WTC11 (cell line): ENCODE measurements at regions of chr14 and their contacts with region 1.

Region 1: DNA sequence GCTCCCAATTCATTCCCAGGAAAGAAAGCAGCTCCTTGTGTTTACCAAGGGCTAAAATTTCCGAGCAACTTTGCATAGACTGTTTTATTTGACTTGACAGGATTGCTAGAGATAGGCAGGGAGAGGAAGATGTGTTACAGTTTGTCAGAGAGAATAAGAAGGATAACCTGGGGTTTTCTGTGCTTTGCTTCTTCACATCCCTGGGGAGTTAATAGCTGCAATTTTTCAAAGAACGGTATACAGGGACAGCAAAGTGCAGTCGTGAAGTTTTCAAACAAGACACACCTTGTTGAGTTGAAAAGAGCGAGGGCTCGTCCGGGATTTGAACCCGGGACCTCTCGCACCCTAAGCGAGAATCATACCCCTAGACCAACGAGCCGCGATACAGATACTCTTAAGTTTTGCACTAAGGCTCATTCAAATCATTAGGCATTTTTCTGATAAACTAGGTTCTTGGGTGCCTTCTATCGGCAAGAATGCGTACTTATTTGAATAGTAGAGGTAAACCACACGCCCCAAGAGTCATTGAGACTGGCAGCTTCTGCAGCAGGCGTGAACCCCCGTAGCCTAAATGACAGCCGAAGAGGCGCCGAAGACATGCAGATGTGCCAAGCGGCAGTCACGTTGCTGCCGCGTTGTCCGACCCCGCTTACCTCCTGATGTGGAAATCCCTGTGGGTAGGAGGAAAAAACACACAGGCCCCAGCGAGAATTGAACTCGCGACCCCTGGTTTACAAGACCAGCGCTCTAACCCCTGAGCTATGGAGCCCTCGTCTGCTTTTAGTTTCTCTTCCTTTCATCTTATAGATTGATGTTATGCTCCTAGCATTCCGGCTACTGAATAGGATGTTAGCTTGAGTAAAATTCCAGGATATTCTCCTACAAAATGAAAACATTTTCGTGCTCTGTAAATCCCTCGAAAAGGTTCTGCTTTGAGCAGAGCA is 22.2 kb upstream of the RNASE12 start:
- DNase-seq: peak; percentile 83
- ATAC-seq: peak; percentile 82
- H3K4me3 Mint-ChIP-seq: no peak overlapping the region
- H3K27ac Mint-ChIP-seq: no peak overlapping the region
- H3K4me1 Mint-ChIP-seq: peaks cover 11% of the 10 kb centered on the region
- H3K27me3 Mint-ChIP-seq: no peaks in the 10 kb centered on the region
- CTCF ChIP-seq: peak; percentile 72

Region 2: DNA sequence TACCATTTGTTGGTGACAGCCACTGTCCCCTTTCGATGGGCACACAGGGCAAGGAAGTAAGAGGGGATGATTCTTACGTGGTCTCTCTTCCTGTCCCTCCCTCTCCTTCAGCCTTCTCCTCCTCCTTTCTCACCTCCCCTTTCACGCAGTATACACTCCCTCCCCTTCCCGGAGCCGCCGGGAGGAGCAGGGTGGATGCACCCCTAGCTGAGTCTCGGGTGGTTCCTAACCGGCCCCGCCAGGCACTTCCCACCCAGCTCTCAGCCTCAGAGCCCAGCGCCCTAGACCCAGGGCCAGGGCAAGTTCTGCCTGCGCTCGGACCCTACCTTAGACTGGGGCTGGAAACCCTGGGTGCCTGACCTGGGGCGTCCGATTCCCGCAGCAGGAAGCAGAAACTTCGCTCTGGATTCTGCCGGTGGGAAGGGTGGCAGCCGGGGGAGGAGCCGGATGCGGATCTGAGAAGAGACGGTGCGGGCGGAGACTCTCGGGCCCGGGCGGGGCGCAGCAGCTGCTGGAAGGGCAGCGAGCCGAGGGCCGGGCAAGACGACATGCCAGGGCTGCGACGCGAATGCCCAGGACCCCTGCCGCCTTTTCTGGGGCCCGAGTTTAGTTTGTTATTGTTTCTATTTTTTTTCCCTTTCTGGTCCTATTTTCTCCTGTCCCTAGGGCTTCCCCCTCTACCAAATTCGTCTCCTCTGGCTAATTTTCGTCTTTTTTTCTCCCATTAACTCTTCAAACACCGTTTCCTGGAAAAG is 200.1 kb before region 1 on chr14 and contains the start of gene TEP1:
- CTCF ChIA-PET with region 1: interaction called, 11 read pairs
- POLR2A ChIA-PET with region 1: no interaction called
- DNase-seq: peak; percentile 80
- ATAC-seq: peak; percentile 84
- H3K4me3 Mint-ChIP-seq: peak within 1 kb of the TSS; percentile 87
- H3K27ac Mint-ChIP-seq: peak within 1 kb of the TSS; percentile 95
- H3K4me1 Mint-ChIP-seq: peaks cover 16% of the 10 kb centered on the region
- H3K27me3 Mint-ChIP-seq: no peaks in the 10 kb centered on the region
- CTCF ChIP-seq: no peak
- total RNA-seq, gene TEP1: 16.0 to 19.4 TPM (median 18.8 TPM) in 3 replicates

Region 3: GRCh38 chr14:20461274-20462001 is 151.9 kb before region 1 on chr14 and contains the start of gene PIP4P1:
- CTCF ChIA-PET with region 1: interaction called, 21 read pairs
- POLR2A ChIA-PET with region 1: interaction called, 3 read pairs
- DNase-seq: peak; percentile 97
- ATAC-seq: peak; percentile 95
- H3K4me3 Mint-ChIP-seq: peak within 1 kb of the TSS; percentile 84
- H3K27ac Mint-ChIP-seq: peak within 1 kb of the TSS; percentile 98
- H3K4me1 Mint-ChIP-seq: peaks cover 16% of the 10 kb centered on the region
- H3K27me3 Mint-ChIP-seq: peaks cover 5% of the 10 kb centered on the region
- CTCF ChIP-seq: no peak
- total RNA-seq, gene PIP4P1: 28.3 to 34.1 TPM (median 29.7 TPM) in 3 replicates

Region 4: GRCh38 chr14:20623798-20624197 is 10.4 kb after region 1 on chr14:
- CTCF ChIA-PET with region 1: interaction called, 13 read pairs
- POLR2A ChIA-PET with region 1: interaction called, 7 read pairs
- DNase-seq: peak; percentile 43
- ATAC-seq: no peak
- H3K4me3 Mint-ChIP-seq: peak overlapping the region; percentile 93
- H3K27ac Mint-ChIP-seq: no peak overlapping the region
- H3K4me1 Mint-ChIP-seq: peaks cover 34% of the 10 kb centered on the region
- H3K27me3 Mint-ChIP-seq: peaks cover 44% of the 10 kb centered on the region
- CTCF ChIP-seq: no peak

Region 5: GRCh38 chr14:20652996-20653975 is 39.9 kb after region 1 on chr14:
- CTCF ChIA-PET with region 1: interaction called, 10 read pairs
- POLR2A ChIA-PET with region 1: no interaction called
- DNase-seq: peak; percentile 91
- ATAC-seq: peak; percentile 52
- H3K4me3 Mint-ChIP-seq: peak overlapping the region; percentile 94
- H3K27ac Mint-ChIP-seq: peak overlapping the region; percentile 50; the same call in 1 of the 2 replicates
- H3K4me1 Mint-ChIP-seq: peaks cover 33% of the 10 kb centered on the region
- H3K27me3 Mint-ChIP-seq: peaks cover 38% of the 10 kb centered on the region
- CTCF ChIP-seq: no peak

Region 6: DNA sequence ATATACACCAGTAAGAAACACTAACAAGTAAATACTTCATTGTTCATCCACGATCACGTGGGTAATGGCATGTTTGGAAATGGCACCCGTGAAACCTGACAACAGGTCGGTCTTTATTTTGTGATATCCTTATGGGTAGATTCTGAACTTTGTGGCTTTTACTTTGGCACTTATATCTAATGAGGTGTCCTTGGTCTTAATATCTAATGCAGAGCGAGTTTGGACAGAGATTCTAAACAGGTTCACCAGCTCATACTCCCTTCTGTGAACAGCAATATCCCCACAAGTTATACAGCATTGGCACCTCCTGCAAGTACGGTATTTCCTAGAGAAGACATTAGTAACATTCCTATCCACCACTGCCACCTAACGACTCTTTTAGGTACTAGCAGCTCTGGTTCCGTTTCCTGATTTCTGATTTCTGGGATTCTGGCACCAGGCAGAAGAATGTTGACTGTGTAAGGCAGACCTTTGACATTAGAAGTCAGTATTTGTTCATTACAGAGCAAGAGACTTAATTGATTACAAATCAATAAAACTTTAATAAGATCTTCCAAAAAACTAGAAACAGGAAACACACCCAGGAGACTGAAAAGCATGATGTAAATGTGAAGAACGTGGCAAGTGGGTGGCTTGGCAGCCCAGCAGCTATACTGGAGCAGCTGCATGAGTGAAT is 77.6 kb after region 1 on chr14:
- CTCF ChIA-PET with region 1: interaction called, 18 read pairs
- POLR2A ChIA-PET with region 1: interaction called, 3 read pairs
- DNase-seq: peak; percentile 41
- ATAC-seq: peak; percentile 92
- H3K4me3 Mint-ChIP-seq: no peak overlapping the region
- H3K27ac Mint-ChIP-seq: no peak overlapping the region
- H3K4me1 Mint-ChIP-seq: peaks cover 5% of the 10 kb centered on the region; the same call in 1 of the 2 replicates
- H3K27me3 Mint-ChIP-seq: peaks cover 4% of the 10 kb centered on the region
- CTCF ChIP-seq: peak; percentile 58; the same call in 1 of the 2 replicates